Astrocyte of the cerebellum (primary cell): ENCODE measurements at regions of chr1 and their contacts with region 1.

Region 1: DNA sequence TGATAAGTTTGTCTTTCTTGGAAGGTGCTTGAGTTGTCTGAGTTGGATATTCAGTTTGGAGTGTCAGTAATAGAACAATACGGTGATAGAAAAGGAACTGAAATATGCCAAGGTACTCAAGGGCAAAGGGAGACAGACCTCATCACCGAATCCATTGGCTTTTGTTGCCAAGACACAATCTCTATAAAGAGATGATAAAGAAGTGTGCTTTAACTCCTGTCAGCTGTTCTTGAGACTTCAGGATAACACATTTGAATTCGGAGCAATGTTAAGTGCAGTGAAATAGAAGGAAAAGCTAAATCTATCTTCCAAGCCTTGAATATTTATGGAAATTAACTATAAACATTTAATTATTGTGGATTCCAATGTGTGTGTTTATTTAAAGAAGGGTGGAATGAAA is 194.7 kb downstream of the DISC1 start:
- DNase-seq: no peak
- H3K4me3 ChIP-seq: no peak overlapping the region
- CTCF ChIP-seq: no peak

Region 2: GRCh38 chr1:231768416-231768815 is 52.9 kb before region 1 on chr1:
- in situ Hi-C with region 1: loop called (anchors 5 kb)
- DNase-seq: no peak
- H3K4me3 ChIP-seq: no peak overlapping the region
- CTCF ChIP-seq: no peak

Region 3: GRCh38 chr1:231779081-231779480 is 42.2 kb before region 1 on chr1:
- in situ Hi-C with region 1: no loop called
- DNase-seq: no peak
- H3K4me3 ChIP-seq: no peak overlapping the region
- CTCF ChIP-seq: no peak

Region 4: DNA sequence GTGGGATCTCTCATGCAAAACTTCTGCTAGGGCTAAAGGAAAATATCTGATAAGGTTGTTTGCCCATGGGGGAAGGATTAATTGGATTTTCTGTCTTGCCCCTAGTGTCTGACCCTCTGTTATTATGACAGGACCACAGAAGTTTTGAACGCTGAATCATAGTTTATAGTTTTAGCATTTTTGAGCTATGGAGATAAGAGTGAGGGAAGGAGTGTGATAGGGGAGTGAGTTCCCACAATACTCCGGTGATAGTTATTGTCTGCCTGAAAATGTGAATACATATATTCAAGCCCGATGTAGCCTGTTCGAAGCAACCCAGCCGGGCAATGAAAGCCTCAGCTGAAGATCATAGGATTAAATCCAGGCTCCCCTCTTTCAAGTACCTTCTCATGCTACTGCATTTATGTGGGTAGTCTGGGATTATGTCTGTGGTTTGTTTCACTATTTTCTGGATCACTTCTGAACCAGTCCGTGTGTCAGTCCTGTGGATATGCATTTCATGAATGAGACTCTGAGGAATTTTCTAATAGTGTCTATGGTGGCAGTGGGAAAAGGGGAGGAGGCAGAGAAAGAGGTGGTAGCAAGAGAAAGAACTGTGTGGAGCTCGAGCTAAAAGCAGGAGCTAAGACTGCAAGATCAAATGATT is 64.1 kb after region 1 on chr1:
- in situ Hi-C with region 1: no loop called
- DNase-seq: no peak
- H3K4me3 ChIP-seq: no peak overlapping the region
- CTCF ChIP-seq: no peak

Region 5: DNA sequence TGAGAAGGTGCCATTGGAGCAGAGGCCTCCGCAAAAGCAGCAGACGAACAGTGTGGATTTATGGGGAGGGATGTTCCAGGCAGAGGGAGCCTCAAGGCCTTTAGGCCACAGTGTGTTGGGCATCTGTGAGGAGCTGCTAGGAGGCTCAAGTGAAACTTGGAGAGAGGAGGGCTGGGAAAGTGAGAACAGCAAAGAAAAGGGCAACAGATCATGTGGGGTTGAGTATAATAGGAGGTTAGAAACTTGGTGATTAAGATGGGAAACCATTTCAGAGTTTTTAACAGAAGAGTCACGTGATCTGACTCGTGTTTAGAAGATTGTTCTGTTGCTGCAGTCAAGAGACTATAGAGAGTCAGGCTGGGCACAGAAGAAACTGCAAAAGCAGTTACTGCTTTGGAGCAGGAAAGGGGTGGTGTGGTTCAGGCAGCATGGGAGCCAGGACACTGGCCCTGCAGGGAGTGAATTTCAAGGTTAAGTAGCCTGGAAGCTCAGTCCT is 82.4 kb after region 1 on chr1:
- in situ Hi-C with region 1: no loop called
- DNase-seq: no peak
- H3K4me3 ChIP-seq: no peak overlapping the region
- CTCF ChIP-seq: no peak